Ovary (tissue), 10 donors: ENCODE measurements at regions of chr1 and their contacts with region 1.

Region 1: GRCh38 chr1:203340112-203340804 is 10.7 kb downstream of the FMOD start:
- DNase-seq: peak; percentile 75 to 83 (median 79)
- H3K4me3 ChIP-seq: no peak overlapping the region
- H3K27ac ChIP-seq: peak overlapping the region; percentile 67 to 74
- H3K4me1 ChIP-seq: peaks cover 7% of the 10 kb centered on the region
- H3K27me3 ChIP-seq: no peaks in the 10 kb centered on the region
- CTCF ChIP-seq: peak; percentile 83 to 92 (median 90)
- EP300 ChIP-seq: no peak
- POLR2A ChIP-seq: no peak

Region 2: DNA sequence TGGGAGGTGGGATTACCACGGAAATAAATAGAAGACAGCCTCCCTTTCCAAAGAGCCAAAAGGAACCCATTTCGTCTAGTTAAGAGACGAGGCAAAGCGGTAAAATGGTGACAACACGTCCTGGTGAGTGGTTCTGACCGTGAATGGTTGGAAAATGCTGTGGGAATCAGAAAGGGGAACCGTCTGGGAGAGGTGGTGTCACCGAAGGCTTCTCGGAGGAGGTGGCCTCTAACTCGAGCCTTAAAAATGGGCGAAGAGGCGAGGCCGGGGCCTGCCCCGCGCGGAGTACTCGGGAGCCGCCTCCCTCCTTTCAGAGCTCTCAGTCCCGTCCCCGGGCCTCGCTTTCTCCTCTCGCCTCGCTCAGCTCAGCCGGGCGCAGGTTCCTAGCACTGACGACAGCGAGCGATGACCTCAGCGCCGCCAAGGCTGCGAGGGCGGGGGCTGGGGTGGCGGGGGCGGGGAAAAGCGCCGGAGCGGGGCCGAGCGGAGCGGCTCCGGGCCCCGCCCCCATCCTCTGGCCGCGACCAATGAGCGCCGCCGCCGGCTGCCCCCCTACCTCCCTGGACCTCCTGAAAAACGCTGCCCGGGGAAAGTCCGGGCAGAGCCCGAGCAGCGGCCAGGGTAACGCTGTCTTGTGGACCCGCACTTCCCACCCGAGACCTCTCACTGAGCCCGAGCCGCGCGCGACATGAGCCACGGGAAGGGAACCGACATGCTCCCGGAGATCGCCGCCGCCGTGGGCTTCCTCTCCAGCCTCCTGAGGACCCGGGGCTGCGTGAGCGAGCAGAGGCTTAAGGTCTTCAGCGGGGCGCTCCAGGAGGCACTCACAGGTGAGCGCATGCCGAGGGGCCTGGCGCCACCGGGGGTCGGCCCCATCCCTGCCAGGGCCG is 35.1 kb before region 1 on chr1 and contains the start of gene BTG2:
- intact Hi-C with region 1: no loop called
- DNase-seq: peak; percentile 94 to 96 (median 96)
- H3K4me3 ChIP-seq: peak within 1 kb of the TSS; percentile 79
- H3K27ac ChIP-seq: peak within 1 kb of the TSS; percentile 99
- H3K4me1 ChIP-seq: peaks cover 9% of the 10 kb centered on the region
- H3K27me3 ChIP-seq: no peaks in the 10 kb centered on the region
- CTCF ChIP-seq: peak in 1 of 3 donors; percentile 6
- EP300 ChIP-seq: peak; percentile 56
- POLR2A ChIP-seq: peak; percentile 100
- total RNA-seq, gene BTG2: 124 to 395 (median 220) TPM

Region 3: DNA sequence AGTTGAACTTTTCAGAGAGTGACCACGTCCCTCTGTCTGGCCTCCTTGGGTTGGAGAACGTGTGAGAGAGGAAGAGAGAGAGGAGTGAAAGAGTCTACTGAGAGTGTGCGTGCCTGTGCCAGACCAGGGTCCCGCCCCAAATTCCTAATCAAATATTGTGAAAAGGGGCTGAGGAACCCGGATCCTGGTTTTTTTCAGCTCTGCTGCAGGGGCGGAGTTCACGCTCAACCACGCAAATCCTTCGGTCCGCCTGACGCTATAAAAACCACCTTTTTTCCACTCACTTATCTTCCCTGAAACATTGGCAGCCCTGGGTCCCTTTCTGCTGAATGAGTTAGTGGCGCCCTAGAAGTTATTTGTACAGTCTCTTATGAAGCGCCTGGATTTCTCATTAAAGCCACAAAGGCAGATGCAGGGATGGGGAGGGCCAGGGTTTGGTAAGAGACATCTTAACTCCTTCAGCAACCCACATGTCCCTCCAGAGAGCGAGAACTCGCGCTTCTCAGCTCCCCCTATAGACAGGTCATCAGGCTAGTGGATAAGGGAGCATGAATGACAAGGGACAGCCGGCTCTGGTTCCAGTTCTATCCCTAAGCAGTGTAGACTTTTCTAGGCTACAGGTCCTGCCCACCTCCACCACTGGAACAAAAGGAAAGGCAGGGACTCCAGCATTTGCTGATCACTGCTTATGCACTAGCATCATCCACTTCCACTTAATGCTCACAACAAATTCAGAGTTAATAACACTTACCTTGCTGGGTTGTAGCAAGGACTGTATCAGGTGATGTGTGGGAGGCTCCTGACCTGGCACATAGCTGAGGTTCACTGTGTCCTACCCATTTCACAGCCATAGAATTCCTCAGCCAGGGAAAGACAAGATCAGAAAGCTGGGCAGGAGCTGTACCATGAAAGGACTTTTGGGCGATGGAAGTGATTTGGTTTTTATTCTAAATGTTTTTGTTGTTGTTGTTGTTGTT is 11.1 kb after region 1 on chr1 and contains the start of gene FMOD:
- intact Hi-C with region 1: no loop called
- DNase-seq: peak; percentile 78 to 89 (median 80)
- H3K4me3 ChIP-seq: peak within 1 kb of the TSS; percentile 46
- H3K27ac ChIP-seq: peak within 1 kb of the TSS; percentile 58 to 72
- H3K4me1 ChIP-seq: peaks cover 6% of the 10 kb centered on the region
- H3K27me3 ChIP-seq: no peaks in the 10 kb centered on the region
- CTCF ChIP-seq: no peak
- EP300 ChIP-seq: no peak
- POLR2A ChIP-seq: peak; percentile 36
- total RNA-seq, gene FMOD: 110 to 158 (median 137) TPM

Region 4: DNA sequence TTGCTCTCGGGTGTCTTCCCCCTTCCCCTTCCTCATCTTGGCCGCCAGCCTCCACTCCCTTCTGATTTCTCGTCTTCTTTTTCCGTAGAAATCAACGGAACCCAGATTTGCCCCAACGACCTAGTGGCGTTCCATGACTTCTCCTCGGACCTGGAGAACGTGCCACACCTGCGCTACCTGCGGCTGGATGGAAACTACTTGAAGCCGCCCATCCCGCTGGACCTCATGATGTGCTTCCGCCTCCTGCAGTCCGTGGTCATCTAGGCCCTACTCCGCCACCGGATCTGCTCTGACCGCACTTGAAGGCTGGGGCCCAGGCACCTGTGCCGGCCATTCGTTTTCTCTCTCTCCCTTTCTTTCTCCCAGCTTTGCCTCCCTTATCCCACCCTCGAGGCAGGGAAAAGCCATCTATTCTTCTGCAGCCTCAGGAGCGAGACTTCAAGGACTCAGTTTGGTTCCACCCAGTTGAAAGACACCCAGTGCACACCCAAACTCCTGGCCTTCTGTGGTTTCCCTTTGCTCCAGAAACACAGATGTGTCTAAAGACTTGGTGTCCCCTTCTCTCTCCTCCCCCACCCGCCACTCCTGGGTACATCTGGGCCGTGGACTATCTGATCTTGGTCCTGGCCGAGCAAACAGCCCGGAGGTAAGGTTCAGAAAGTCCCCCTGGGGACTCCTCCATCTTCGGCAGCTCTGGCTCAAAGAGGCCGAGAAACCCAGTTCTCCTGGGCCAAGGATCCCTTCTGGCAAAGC is 146.5 kb after region 1 on chr1:
- intact Hi-C with region 1: loop called in 2 of 4 experiments (anchors 2 kb)
- DNase-seq: peak in 4 of 5 donors; percentile 62 to 67 (median 64)
- H3K4me3 ChIP-seq: peak overlapping the region; percentile 9
- H3K27ac ChIP-seq: peak overlapping the region; percentile 87 to 94
- H3K4me1 ChIP-seq: peaks cover 11% of the 10 kb centered on the region
- H3K27me3 ChIP-seq: no peaks in the 10 kb centered on the region
- CTCF ChIP-seq: no peak
- EP300 ChIP-seq: no peak
- POLR2A ChIP-seq: no peak

Region 5: GRCh38 chr1:203692565-203693470 is 352.6 kb after region 1 on chr1:
- intact Hi-C with region 1: loop called in 2 of 4 experiments (anchors 5 to 10 kb)
- DNase-seq: peak; percentile 91 to 95 (median 92)
- H3K4me3 ChIP-seq: no peak overlapping the region
- H3K27ac ChIP-seq: peak overlapping the region; percentile 63 to 78
- H3K4me1 ChIP-seq: peaks cover 40% of the 10 kb centered on the region
- H3K27me3 ChIP-seq: no peaks in the 10 kb centered on the region
- CTCF ChIP-seq: peak in 2 of 3 donors; percentile 18 to 37
- EP300 ChIP-seq: no peak
- POLR2A ChIP-seq: no peak